PC-9 (cell line): ENCODE measurements at regions of chr14 and their contacts with region 1.

Region 1: DNA sequence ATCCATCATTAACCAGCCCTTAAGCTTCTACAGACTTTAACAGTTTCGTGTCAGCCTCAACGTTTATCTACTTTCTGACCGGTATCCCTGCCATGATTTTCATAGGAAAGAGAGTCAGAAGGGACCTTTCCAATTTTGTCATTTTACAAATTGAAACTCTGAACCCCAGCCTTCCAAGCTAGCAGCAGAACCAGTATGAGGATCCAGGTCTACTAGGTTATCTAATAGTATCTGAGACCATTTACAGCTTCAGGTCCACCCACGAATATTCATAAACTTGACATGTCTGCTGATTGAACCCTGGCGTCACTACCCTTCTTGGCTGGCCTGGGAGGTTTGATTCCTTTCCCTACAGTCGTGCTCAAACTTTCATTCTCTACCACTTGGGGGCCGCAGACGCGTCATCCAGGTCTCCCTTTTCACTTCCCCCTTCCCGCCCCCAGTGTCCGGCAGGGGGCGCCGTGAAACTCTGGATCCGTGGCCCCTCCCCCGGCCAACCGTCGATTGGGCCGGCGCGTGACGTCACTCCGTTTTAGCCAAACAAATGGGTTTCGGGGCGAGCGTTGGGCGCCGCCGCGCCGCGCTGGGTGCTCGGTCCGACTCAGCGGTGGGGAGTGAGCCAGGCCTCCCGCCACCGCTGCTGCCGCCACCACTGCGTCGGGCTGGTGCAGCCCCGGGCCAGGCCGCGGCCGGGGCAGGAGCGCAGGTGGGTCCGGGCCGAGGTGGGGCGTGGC is at the start of gene FBXO34:
- DNase-seq: peak; percentile 86 to 99
- H3K4me3 ChIP-seq: peak within 1 kb of the TSS; percentile 98
- H3K27ac ChIP-seq: peak within 1 kb of the TSS; percentile 71
- H3K4me1 ChIP-seq: peaks cover 37% of the 10 kb centered on the region
- H3K27me3 ChIP-seq: no peaks in the 10 kb centered on the region
- CTCF ChIP-seq: peak; percentile 94
- total RNA-seq, gene FBXO34: 32.8 and 33.1 TPM in 2 replicates

Region 2: DNA sequence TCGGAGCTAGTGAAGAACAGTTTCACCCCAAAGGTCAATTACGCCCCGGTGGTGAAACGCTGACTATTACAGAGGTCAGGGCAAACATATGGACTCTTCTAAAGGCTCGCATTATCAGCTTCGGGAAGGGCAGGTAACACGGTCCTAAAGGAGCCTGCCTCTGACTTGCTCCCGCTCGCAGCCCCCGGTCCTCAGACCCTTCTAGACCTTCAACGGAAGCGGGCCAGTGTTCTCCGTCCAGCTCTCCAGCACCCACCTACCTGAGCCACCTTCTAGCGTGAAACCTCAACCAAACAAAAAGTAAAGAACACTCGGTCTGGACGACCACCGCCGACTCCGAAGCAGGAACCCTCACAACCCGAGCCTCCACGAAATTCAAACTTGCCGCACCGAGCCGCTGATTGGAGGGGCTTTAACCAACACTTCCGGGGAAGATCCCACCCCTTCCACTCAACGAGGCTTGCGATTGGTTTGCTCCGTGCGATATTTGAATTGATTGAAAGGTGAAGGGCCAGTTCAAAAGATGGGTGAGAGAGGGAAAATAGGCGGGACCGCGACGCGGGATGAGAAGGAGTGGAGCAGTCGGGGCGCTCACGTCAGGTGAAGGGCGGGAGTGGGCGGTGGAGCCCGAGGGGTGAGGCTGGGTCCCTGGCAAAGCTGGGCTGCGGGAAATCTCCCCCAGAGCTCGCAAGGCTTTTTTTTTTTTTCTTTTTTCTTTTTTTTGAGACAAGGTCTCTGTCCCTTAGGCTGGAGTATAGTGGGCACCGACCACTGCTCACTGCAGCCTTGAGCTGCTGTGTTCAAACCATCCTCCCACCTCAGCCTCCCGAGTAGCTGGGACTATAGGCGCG is 79.6 kb before region 1 on chr14 and contains the start of gene DLGAP5:
- CTCF ChIA-PET with region 1: interaction called, 5 read pairs
- POLR2A ChIA-PET with region 1: interaction called, 15 read pairs
- intact Hi-C with region 1: no loop called
- DNase-seq: peak; percentile 92 to 94
- H3K4me3 ChIP-seq: peak within 1 kb of the TSS; percentile 79
- H3K27ac ChIP-seq: no peak within 1 kb of the TSS
- H3K4me1 ChIP-seq: peaks cover 18% of the 10 kb centered on the region
- H3K27me3 ChIP-seq: no peaks in the 10 kb centered on the region
- CTCF ChIP-seq: no peak
- total RNA-seq, gene DLGAP5: 51.7 and 80.0 TPM in 2 replicates

Region 3: DNA sequence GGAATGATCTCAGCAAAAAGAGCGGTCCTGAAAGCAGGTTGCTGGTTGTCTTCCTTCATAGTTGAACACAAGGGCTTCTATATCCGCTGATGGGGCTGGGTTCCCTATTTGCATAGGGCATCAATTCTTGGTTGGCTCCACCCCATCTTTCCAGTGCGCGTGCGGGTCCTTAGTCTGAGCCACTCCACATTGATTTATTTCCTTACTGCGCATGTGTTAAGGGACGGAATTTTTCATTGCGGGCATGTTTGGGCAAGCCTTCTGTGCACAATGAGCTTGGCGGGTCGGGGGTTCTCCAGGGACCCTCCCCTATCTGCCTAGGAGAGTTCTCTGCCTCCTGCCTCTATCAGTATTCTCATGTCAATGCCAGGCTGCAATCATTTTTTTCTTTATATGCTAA is 58.4 kb before region 1 on chr14:
- CTCF ChIA-PET with region 1: no interaction called
- POLR2A ChIA-PET with region 1: no interaction called
- intact Hi-C with region 1: loop called (anchors 1 kb)
- DNase-seq: no peak
- H3K4me3 ChIP-seq: no peak overlapping the region
- H3K27ac ChIP-seq: no peak overlapping the region
- H3K4me1 ChIP-seq: no peaks in the 10 kb centered on the region
- H3K27me3 ChIP-seq: no peaks in the 10 kb centered on the region
- CTCF ChIP-seq: no peak

Region 4: GRCh38 chr14:55301437-55302121 is 30.6 kb after region 1 on chr14:
- CTCF ChIA-PET with region 1: no interaction called
- POLR2A ChIA-PET with region 1: no interaction called
- intact Hi-C with region 1: no loop called
- DNase-seq: no peak
- H3K4me3 ChIP-seq: no peak overlapping the region
- H3K27ac ChIP-seq: no peak overlapping the region
- H3K4me1 ChIP-seq: no peaks in the 10 kb centered on the region
- H3K27me3 ChIP-seq: no peaks in the 10 kb centered on the region
- CTCF ChIP-seq: no peak

Region 5: GRCh38 chr14:55339770-55340169 is 68.8 kb after region 1 on chr14:
- CTCF ChIA-PET with region 1: no interaction called
- POLR2A ChIA-PET with region 1: no interaction called
- intact Hi-C with region 1: loop called (anchors 5 kb)
- DNase-seq: no peak
- H3K4me3 ChIP-seq: no peak overlapping the region
- H3K27ac ChIP-seq: no peak overlapping the region
- H3K4me1 ChIP-seq: peaks cover 25% of the 10 kb centered on the region
- H3K27me3 ChIP-seq: no peaks in the 10 kb centered on the region
- CTCF ChIP-seq: no peak

Region 6: GRCh38 chr14:55354500-55354899 is 83.5 kb after region 1 on chr14:
- CTCF ChIA-PET with region 1: interaction called, 4 read pairs
- POLR2A ChIA-PET with region 1: no interaction called
- intact Hi-C with region 1: loop called (anchors 1 kb)
- DNase-seq: peak in 1 of 2 experiments; percentile 29
- H3K4me3 ChIP-seq: no peak overlapping the region
- H3K27ac ChIP-seq: no peak overlapping the region
- H3K4me1 ChIP-seq: no peaks in the 10 kb centered on the region
- H3K27me3 ChIP-seq: no peaks in the 10 kb centered on the region
- CTCF ChIP-seq: peak; percentile 64

Region 7: GRCh38 chr14:55411426-55412389 is 140.7 kb after region 1 on chr14 and contains the start of gene ATG14:
- CTCF ChIA-PET with region 1: no interaction called
- POLR2A ChIA-PET with region 1: no interaction called
- intact Hi-C with region 1: loop called (anchors 5 kb)
- DNase-seq: peak; percentile 69 to 74
- H3K4me3 ChIP-seq: peak within 1 kb of the TSS; percentile 66
- H3K27ac ChIP-seq: peak within 1 kb of the TSS; percentile 97
- H3K4me1 ChIP-seq: peaks cover 32% of the 10 kb centered on the region
- H3K27me3 ChIP-seq: no peaks in the 10 kb centered on the region
- CTCF ChIP-seq: no peak
- total RNA-seq, gene ATG14: 13.6 and 14.6 TPM in 2 replicates